IMR-90 (cell line): ENCODE measurements at regions of chr16 and their contacts with region 1.

Region 1: DNA sequence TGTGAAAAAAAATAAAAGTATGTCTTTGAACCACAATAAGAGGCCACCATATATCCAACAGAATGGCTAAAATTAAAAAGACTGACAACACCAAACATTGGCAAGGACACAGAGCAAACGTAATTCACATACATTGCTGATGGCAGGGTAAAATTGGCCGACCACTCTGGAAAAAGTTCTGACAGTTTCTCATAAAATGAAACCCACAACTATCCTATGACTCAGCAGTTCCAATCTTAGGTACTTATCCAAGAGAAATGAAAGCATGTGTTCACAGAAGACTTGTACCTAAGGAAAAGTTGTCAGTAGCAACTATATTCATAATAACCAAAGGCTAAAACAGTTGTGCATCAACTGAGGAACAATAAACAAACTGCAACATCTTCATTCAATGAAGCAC is 357.3 kb upstream of the XYLT1 start:
- DNase-seq: peak; percentile 90
- ATAC-seq: peak; percentile 40; the same call in 1 of the 2 replicates
- H3K4me3 ChIP-seq: no peak overlapping the region
- H3K27ac ChIP-seq: no peak overlapping the region
- H3K4me1 ChIP-seq: no peaks in the 10 kb centered on the region
- H3K27me3 ChIP-seq: no peaks in the 10 kb centered on the region
- CTCF ChIP-seq: no peak
- POLR2A ChIP-seq: no peak
- RAD21 ChIP-seq: no peak

Region 2: GRCh38 chr16:17768257-17768656 is 59.8 kb before region 1 on chr16:
- CTCF ChIA-PET with region 1: no interaction called
- POLR2A ChIA-PET with region 1: no interaction called
- dilution Hi-C with region 1: no loop called
- in situ Hi-C with region 1: loop called (anchors 10 kb)
- intact Hi-C with region 1: no loop called
- DNase-seq: peak; percentile 62
- ATAC-seq: peak; percentile 24; the same call in 1 of the 2 replicates
- H3K4me3 ChIP-seq: no peak overlapping the region
- H3K27ac ChIP-seq: no peak overlapping the region
- H3K4me1 ChIP-seq: no peaks in the 10 kb centered on the region
- H3K27me3 ChIP-seq: no peaks in the 10 kb centered on the region
- CTCF ChIP-seq: no peak
- POLR2A ChIP-seq: no peak
- RAD21 ChIP-seq: no peak

Region 3: DNA sequence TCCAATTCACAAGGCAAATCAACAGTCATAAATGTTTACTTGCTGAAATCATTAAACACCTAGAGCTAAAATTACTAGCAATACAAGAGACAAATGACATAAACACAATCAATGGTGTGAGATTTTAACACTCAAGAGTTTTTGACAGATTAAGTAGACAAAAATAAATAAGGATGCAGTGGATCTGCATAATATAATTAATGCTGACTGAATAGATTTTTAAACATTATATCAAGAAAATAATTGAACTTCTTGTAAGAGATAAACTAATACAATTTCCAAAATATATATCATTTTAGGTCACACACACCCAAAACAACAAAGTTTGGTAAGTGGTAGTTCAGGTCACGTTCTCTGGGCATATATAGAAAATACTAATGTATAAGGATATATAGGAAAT is 34.7 kb before region 1 on chr16:
- CTCF ChIA-PET with region 1: no interaction called
- POLR2A ChIA-PET with region 1: no interaction called
- dilution Hi-C with region 1: no loop called
- in situ Hi-C with region 1: no loop called
- intact Hi-C with region 1: no loop called
- DNase-seq: no peak
- ATAC-seq: no peak
- H3K4me3 ChIP-seq: no peak overlapping the region
- H3K27ac ChIP-seq: no peak overlapping the region
- H3K4me1 ChIP-seq: no peaks in the 10 kb centered on the region
- H3K27me3 ChIP-seq: no peaks in the 10 kb centered on the region; the same call in 1 of the 2 replicates
- CTCF ChIP-seq: no peak
- POLR2A ChIP-seq: no peak
- RAD21 ChIP-seq: no peak